ENCODE measurements at regions of chr1 and their contacts with region 1.

Region 1: GRCh38 chr1:35564037-35564883 is 6.7 kb downstream of the NCDN start:
- DNase-seq: peak in 2 of 3 donors; percentile 73 to 78
- ATAC-seq: peak; percentile 46 to 64 (median 54)
- H3K4me3 ChIP-seq: no peak overlapping the region
- H3K27ac ChIP-seq: no peak overlapping the region
- H3K4me1 ChIP-seq: peaks cover 0 to 9% (median 2%) of the 10 kb centered on the region in 4 donors
- H3K27me3 ChIP-seq: no peaks in the 10 kb centered on the region
- CTCF ChIP-seq: peak; percentile 66 to 79 (median 74)
- POLR2A ChIP-seq: no peak

Region 2: GRCh38 chr1:35202048-35202719 is 362.1 kb before region 1 on chr1:
- intact Hi-C with region 1: loop called in 1 of 2 experiments (anchors 10 kb)
- DNase-seq: peak in 2 of 3 donors; percentile 38 to 64
- ATAC-seq: peak; percentile 99 to 100 (median 100)
- H3K4me3 ChIP-seq: no peak overlapping the region
- H3K27ac ChIP-seq: no peak overlapping the region
- H3K4me1 ChIP-seq: no peaks in the 10 kb centered on the region
- H3K27me3 ChIP-seq: no peaks in the 10 kb centered on the region
- CTCF ChIP-seq: peak; percentile 81 to 95 (median 94)
- POLR2A ChIP-seq: no peak

Region 3: GRCh38 chr1:35451125-35451528 is 113.1 kb before region 1 on chr1:
- intact Hi-C with region 1: loop called (anchors 5 kb)
- DNase-seq: peak; percentile 83 to 87 (median 87)
- ATAC-seq: peak; percentile 72 to 88 (median 81)
- H3K4me3 ChIP-seq: no peak overlapping the region
- H3K27ac ChIP-seq: peak overlapping the region in 1 of 3 donors; percentile 9
- H3K4me1 ChIP-seq: peaks cover 0 to 46% (median 21%) of the 10 kb centered on the region in 4 donors
- H3K27me3 ChIP-seq: no peaks in the 10 kb centered on the region
- CTCF ChIP-seq: peak; percentile 82 to 88 (median 84)
- POLR2A ChIP-seq: no peak

Region 4: GRCh38 chr1:35726450-35727433 is 162.5 kb after region 1 on chr1:
- intact Hi-C with region 1: loop called (anchors 5 kb)
- DNase-seq: peak in 1 of 3 donors; percentile 30
- ATAC-seq: peak; percentile 92 to 96 (median 95)
- H3K4me3 ChIP-seq: no peak overlapping the region
- H3K27ac ChIP-seq: no peak overlapping the region
- H3K4me1 ChIP-seq: no peaks in the 10 kb centered on the region
- H3K27me3 ChIP-seq: no peaks in the 10 kb centered on the region
- CTCF ChIP-seq: peak; percentile 72 to 89 (median 88)
- POLR2A ChIP-seq: no peak

Region 5: GRCh38 chr1:35769759-35770446 is 205.6 kb after region 1 on chr1 and contains the start of gene CLSPN:
- intact Hi-C with region 1: loop called (anchors 5 to 10 kb)
- DNase-seq: peak; percentile 95 to 96 (median 95)
- ATAC-seq: peak; percentile 96 to 98 (median 97)
- H3K4me3 ChIP-seq: peak within 1 kb of the TSS; percentile 79 to 93 (median 82)
- H3K27ac ChIP-seq: peak within 1 kb of the TSS; percentile 57 to 80 (median 78)
- H3K4me1 ChIP-seq: peaks cover 0 to 14% (median 2%) of the 10 kb centered on the region in 4 donors
- H3K27me3 ChIP-seq: no peaks in the 10 kb centered on the region
- CTCF ChIP-seq: no peak
- POLR2A ChIP-seq: peak; percentile 27
- total RNA-seq, gene CLSPN: 0.13 to 3.2 (median 0.31) TPM

Measured in right lobe of liver (tissue), 6 donors.